B cell (primary cell): ENCODE measurements at regions of chr9 and their contacts with region 1.

Region 1: DNA sequence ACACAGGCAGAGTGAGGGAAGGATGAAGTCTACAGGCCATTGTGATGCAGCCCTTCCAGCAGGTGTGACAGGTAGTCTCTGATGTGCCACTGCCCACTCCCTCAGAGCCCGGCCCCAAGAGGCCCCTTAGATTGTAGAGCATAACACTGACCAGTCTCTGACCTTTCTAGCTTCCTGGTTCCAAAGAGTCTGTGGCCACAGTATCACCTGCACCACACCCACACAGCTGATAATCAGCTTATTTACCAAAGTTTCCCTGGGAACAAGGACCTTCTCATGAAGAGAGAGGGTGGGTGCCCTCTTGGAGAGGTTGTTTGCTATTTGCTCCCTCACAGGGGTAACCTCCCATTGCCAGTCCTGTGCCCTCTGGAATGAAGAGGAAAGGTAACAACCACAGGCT is 11.0 kb upstream of the ACER2 start:
- DNase-seq: no peak
- ATAC-seq: no peak
- H3K4me3 ChIP-seq: no peak overlapping the region
- H3K4me3 Mint-ChIP-seq: no peak overlapping the region
- H3K27ac ChIP-seq: no peak overlapping the region
- H3K27ac Mint-ChIP-seq: no peak overlapping the region
- H3K4me1 ChIP-seq: no peaks in the 10 kb centered on the region
- H3K4me1 Mint-ChIP-seq: no peaks in the 10 kb centered on the region
- H3K27me3 ChIP-seq: no peaks in the 10 kb centered on the region
- H3K27me3 Mint-ChIP-seq: no peaks in the 10 kb centered on the region
- CTCF ChIP-seq: no peak

Region 2: GRCh38 chr9:19441730-19442129 is 43.9 kb after region 1 on chr9:
- CTCF ChIA-PET with region 1: no interaction called
- POLR2A ChIA-PET with region 1: no interaction called
- intact Hi-C with region 1: loop called (anchors 1 kb)
- DNase-seq: peak; percentile 53
- ATAC-seq: peak; percentile 67
- H3K4me3 ChIP-seq: peak overlapping the region; percentile 23 to 63 (median 55)
- H3K4me3 Mint-ChIP-seq: peak overlapping the region; percentile 72
- H3K27ac ChIP-seq: peak overlapping the region; percentile 57 to 81
- H3K27ac Mint-ChIP-seq: peak overlapping the region; percentile 51
- H3K4me1 ChIP-seq: peaks cover 15 to 19% of the 10 kb centered on the region in 2 donors
- H3K4me1 Mint-ChIP-seq: peaks cover 18% of the 10 kb centered on the region
- H3K27me3 ChIP-seq: no peaks in the 10 kb centered on the region
- H3K27me3 Mint-ChIP-seq: no peaks in the 10 kb centered on the region
- CTCF ChIP-seq: no peak